HEK293T (cell line): ENCODE measurements at regions of chr4 and their contacts with region 1.

Region 1: GRCh38 chr4:6327041-6327917 is 57.6 kb downstream of the WFS1 start:
- DNase-seq: peak; percentile 89

Region 2: GRCh38 chr4:5998333-5998936 is 328.8 kb before region 1 on chr4:
- CTCF ChIA-PET with region 1: interaction called, 10 read pairs
- POLR2A ChIA-PET with region 1: no interaction called
- DNase-seq: peak; percentile 83

Region 3: DNA sequence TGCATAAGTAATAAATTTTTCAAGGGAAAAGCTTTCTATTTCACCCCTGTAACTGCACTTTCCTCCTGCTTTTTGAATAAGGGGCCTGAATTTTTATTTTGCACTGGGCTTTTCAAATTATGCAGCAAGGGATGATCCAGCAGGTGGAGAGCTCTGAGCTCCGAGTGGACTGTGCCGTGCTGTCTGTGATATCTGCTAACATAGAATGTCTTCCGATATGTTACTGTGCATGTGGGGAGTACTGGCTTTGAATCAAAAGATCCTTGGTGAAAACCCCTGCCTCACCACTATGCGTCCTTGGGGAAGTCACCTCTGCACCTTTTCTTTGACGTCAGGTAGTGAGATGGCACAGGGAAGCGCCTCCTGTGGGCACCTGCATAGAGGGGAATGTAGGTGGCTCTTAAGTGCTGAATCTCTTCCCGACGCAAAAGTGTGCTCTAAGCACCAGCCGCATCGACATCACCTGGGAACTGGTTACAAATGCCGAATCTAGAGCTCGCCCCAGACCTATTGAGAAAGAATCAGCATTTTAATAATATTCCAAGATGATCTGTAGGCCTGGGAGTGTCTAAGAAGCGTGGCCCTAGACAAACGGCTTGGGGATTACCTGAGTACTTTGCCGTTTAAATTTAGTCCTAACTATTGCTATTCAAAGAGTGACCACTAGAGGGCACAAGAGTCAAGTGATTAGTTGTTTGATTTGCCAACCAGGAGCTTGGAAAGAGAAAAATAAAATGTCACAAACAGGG is 76.9 kb before region 1 on chr4:
- CTCF ChIA-PET with region 1: interaction called, 149 read pairs
- POLR2A ChIA-PET with region 1: no interaction called
- DNase-seq: peak; percentile 70

Region 4: GRCh38 chr4:6264225-6264540 is 63.1 kb before region 1 on chr4:
- CTCF ChIA-PET with region 1: interaction called, 18 read pairs
- POLR2A ChIA-PET with region 1: interaction called, 3 read pairs
- DNase-seq: no peak

Region 5: GRCh38 chr4:6341696-6342095 is 14.4 kb after region 1 on chr4:
- CTCF ChIA-PET with region 1: interaction called, 15 read pairs
- POLR2A ChIA-PET with region 1: no interaction called
- DNase-seq: no peak